Panc1 (cell line): ENCODE measurements at regions of chr11 and their contacts with region 1.

Region 1: DNA sequence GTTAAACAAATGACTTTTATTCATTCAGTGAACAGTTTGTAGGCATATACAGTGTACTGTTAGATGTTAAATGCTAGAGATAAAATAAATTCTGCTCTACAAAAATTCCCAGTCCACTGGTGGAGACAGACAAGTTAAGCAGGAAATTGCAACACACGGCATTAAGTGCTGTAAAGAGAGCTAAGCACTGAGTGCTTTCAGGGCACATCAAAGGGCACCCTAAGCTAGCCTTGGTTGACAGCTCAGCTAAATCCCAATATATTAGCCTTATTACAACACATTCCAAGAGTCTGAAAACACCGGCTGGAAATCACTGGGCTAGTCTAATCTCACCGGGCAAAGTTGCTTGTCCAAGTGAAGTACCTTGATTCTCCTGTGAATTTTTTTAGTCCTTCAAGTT is 55.1 kb downstream of the NOX4 start:
- DNase-seq: no peak
- ATAC-seq: no peak
- H3K4me3 ChIP-seq: no peak overlapping the region
- H3K27ac ChIP-seq: no peak overlapping the region
- H3K4me1 ChIP-seq: no peaks in the 10 kb centered on the region
- H3K27me3 ChIP-seq: no peaks in the 10 kb centered on the region
- CTCF ChIP-seq: no peak

Region 2: GRCh38 chr11:89473905-89474304 is 37.8 kb after region 1 on chr11:
- CTCF ChIA-PET with region 1: no interaction called
- POLR2A ChIA-PET with region 1: no interaction called
- in situ Hi-C with region 1: no loop called
- intact Hi-C with region 1: loop called (anchors 5 kb)
- DNase-seq: no peak
- ATAC-seq: no peak
- H3K4me3 ChIP-seq: no peak overlapping the region
- H3K27ac ChIP-seq: no peak overlapping the region
- H3K4me1 ChIP-seq: no peaks in the 10 kb centered on the region
- H3K27me3 ChIP-seq: no peaks in the 10 kb centered on the region
- CTCF ChIP-seq: no peak